ENCODE measurements at regions of chrX and their contacts with region 1.

Region 1: GRCh38 chrX:18886344-18887161 is 97.4 kb downstream of the PHKA2 start:
- DNase-seq: peak; percentile 57
- ATAC-seq: peak; percentile 89
- H3K4me3 ChIP-seq: peak overlapping the region; percentile 33 to 53
- H3K27ac ChIP-seq: peak overlapping the region; percentile 60
- H3K4me1 ChIP-seq: peaks cover 12 to 21% of the 10 kb centered on the region in 2 experiments
- H3K27me3 ChIP-seq: no peaks in the 10 kb centered on the region
- CTCF ChIP-seq: peak; percentile 30 to 57 (median 55); a peak in 5 of 6 replicates
- POLR2A ChIP-seq: no peak
- RAD21 ChIP-seq: peak; percentile 72

Region 2: GRCh38 chrX:18390941-18391538 is 495.5 kb before region 1 on chrX:
- CTCF ChIA-PET with region 1: no interaction called
- POLR2A ChIA-PET with region 1: no interaction called
- RAD21 ChIA-PET with region 1: no interaction called
- intact Hi-C with region 1: loop called (anchors 5 kb)
- DNase-seq: peak; percentile 57
- ATAC-seq: peak; percentile 59; the same call in 1 of the 2 replicates
- H3K4me3 ChIP-seq: no peak overlapping the region
- H3K27ac ChIP-seq: no peak overlapping the region
- H3K4me1 ChIP-seq: no peaks in the 10 kb centered on the region
- H3K27me3 ChIP-seq: no peaks in the 10 kb centered on the region
- CTCF ChIP-seq: peak; percentile 30 to 88 (median 58); a peak in 4 of 6 replicates
- POLR2A ChIP-seq: no peak
- RAD21 ChIP-seq: peak; percentile 79

Region 3: GRCh38 chrX:18410043-18410442 is 476.5 kb before region 1 on chrX:
- CTCF ChIA-PET with region 1: interaction called, 15 read pairs
- POLR2A ChIA-PET with region 1: interaction called, 4 read pairs
- RAD21 ChIA-PET with region 1: no interaction called
- intact Hi-C with region 1: loop called (anchors 1 kb)
- DNase-seq: peak; percentile 21
- ATAC-seq: peak; percentile 64; the same call in 1 of the 2 replicates
- H3K4me3 ChIP-seq: no peak overlapping the region
- H3K27ac ChIP-seq: no peak overlapping the region
- H3K4me1 ChIP-seq: no peaks in the 10 kb centered on the region
- H3K27me3 ChIP-seq: no peaks in the 10 kb centered on the region
- CTCF ChIP-seq: peak; percentile 12 to 51 (median 37); a peak in 4 of 6 replicates
- POLR2A ChIP-seq: no peak
- RAD21 ChIP-seq: peak; percentile 66

Region 4: DNA sequence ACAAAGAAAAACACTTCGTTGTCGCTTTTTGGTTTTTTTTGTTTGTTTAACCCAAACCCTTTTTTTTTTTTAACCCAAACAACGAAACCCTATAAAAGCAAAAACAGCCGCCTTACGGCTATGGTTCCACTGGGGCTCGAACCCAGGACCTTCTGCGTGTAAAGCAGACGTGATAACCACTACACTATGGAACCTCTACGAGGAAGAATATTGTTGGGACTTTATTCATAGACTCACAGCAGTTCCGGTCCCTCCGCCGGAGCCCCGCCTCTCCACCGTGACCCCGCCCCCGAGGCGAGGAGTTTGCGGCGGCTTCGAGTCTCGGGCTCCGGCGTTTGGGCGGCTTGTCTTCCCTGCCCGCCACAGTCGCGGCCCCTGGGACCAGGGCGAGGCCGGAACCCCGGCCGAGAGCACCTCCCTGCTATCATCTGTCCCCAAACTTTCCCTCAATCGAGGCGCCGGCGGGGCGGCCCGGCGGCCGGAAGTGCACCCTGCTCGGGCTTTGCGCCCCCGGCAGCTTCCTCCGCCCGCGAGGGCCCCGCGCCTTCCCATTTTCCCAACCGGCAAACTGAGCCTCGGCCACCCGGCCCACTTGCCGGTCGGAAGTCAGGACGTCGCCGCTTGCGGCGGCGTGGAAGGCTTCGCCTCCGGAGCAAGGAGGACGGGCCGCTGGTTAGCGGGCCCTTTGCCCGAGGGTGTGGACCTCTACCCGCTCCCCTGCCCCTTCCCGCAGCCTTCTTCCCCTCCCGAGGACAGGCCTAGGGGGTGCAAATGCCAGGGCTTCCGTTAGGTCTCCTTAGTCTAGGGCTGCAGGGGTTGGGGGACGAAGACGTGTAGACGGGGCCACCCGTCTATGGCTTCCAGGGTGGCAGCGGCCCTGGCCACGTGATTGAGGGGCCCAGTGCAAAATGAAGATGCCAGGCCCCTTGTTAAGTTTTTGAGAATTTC is 211.5 kb before region 1 on chrX:
- CTCF ChIA-PET with region 1: no interaction called
- POLR2A ChIA-PET with region 1: no interaction called
- RAD21 ChIA-PET with region 1: no interaction called
- intact Hi-C with region 1: loop called (anchors 5 kb)
- DNase-seq: peak; percentile 24
- ATAC-seq: peak; percentile 85
- H3K4me3 ChIP-seq: peak overlapping the region; percentile 38 to 56
- H3K27ac ChIP-seq: peak overlapping the region; percentile 46; the same call in 1 of the 2 replicates
- H3K4me1 ChIP-seq: peaks cover 0 to 6% of the 10 kb centered on the region in 2 experiments; a peak in 1 of 4 replicates
- H3K27me3 ChIP-seq: no peaks in the 10 kb centered on the region
- CTCF ChIP-seq: no peak
- POLR2A ChIP-seq: no peak
- RAD21 ChIP-seq: no peak

Region 5: GRCh38 chrX:18797141-18797540 is 89.4 kb before region 1 on chrX:
- CTCF ChIA-PET with region 1: no interaction called
- POLR2A ChIA-PET with region 1: no interaction called
- RAD21 ChIA-PET with region 1: no interaction called
- intact Hi-C with region 1: no loop called
- DNase-seq: no peak
- ATAC-seq: no peak
- H3K4me3 ChIP-seq: no peak overlapping the region
- H3K27ac ChIP-seq: no peak overlapping the region
- H3K4me1 ChIP-seq: peaks cover 3 to 4% of the 10 kb centered on the region in 2 experiments; a peak in 2 of 4 replicates
- H3K27me3 ChIP-seq: no peaks in the 10 kb centered on the region
- CTCF ChIP-seq: no peak
- POLR2A ChIP-seq: no peak
- RAD21 ChIP-seq: no peak

Region 6: DNA sequence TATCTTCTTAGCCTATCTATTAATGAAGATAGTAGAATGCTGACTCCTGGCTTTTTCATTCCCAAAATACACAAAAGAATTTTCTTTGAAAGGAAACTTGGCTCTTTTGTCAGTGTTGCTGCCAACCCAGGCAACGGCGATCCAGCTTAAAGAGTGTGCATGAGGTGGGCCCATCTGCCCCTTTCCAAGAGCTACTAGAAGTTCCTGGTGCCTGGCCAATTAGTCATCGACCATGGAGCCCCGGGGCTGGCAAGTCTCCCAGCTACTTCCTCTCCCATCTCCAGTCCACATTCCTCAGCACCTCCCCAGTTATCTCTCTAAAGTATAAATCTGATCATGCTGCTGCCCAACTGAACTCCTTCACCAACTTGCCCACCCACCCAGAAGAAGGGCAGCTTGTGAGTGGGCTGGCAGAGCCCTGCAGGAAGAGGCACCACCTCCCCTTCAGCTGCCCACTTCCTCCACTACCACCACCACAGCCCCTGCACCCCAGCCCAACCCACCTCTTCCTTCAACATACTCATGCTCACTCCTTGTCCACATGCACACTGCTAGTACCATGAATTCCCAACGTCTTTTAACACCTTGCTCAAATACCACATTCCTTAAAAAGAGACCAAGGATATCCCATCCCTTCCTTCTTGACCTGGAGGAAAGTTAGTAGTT is 787.0 kb after region 1 on chrX:
- CTCF ChIA-PET with region 1: no interaction called
- POLR2A ChIA-PET with region 1: no interaction called
- RAD21 ChIA-PET with region 1: no interaction called
- intact Hi-C with region 1: no loop called
- DNase-seq: peak; percentile 82
- ATAC-seq: peak; percentile 49
- H3K4me3 ChIP-seq: peak overlapping the region in 1 of 2 experiments; percentile 16; a peak in 1 of 4 replicates
- H3K27ac ChIP-seq: peak overlapping the region; percentile 93
- H3K4me1 ChIP-seq: peaks cover 39 to 66% of the 10 kb centered on the region in 2 experiments
- H3K27me3 ChIP-seq: no peaks in the 10 kb centered on the region
- CTCF ChIP-seq: no peak
- POLR2A ChIP-seq: no peak
- RAD21 ChIP-seq: no peak